Endothelial cell of umbilical vein (primary cell): ENCODE measurements at regions of chr15 and their contacts with region 1.

Region 1: GRCh38 chr15:26954403-26954802 is 16.6 kb upstream of the GABRG3 start:
- DNase-seq: no peak
- H3K4me3 ChIP-seq: no peak overlapping the region
- H3K27ac ChIP-seq: no peak overlapping the region
- H3K4me1 ChIP-seq: no peaks in the 10 kb centered on the region
- H3K27me3 ChIP-seq: no peaks in the 10 kb centered on the region
- CTCF ChIP-seq: no peak
- POLR2A ChIP-seq: no peak

Region 2: DNA sequence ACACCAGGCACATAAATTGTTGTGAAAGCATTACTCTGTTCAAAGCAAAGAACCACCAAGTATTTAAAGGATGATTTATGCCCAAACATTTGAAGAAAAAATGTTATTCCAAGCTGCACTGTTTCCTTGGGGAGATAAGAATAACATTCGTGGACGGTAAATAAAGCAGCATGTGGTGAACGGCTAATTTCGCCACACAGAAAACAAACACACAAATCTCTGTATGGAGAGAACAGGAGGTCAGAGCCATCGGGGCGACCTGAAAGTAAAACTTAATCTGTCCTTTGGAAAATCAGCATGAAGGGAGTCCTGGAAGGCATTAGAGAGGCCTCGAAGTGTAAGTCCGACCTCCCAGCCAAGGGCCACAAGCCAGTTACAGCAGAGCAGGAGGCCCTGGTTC is 10.5 kb before region 1 on chr15:
- CTCF ChIA-PET with region 1: no interaction called
- POLR2A ChIA-PET with region 1: no interaction called
- dilution Hi-C with region 1: no loop called
- intact Hi-C with region 1: no loop called
- DNase-seq: no peak
- H3K4me3 ChIP-seq: no peak overlapping the region
- H3K27ac ChIP-seq: no peak overlapping the region
- H3K4me1 ChIP-seq: no peaks in the 10 kb centered on the region
- H3K27me3 ChIP-seq: no peaks in the 10 kb centered on the region
- CTCF ChIP-seq: no peak
- POLR2A ChIP-seq: no peak

Region 3: GRCh38 chr15:26974120-26974780 is 19.8 kb after region 1 on chr15:
- CTCF ChIA-PET with region 1: no interaction called
- POLR2A ChIA-PET with region 1: no interaction called
- dilution Hi-C with region 1: no loop called
- intact Hi-C with region 1: loop called (anchors 2 kb)
- DNase-seq: no peak
- H3K4me3 ChIP-seq: no peak overlapping the region
- H3K27ac ChIP-seq: no peak overlapping the region
- H3K4me1 ChIP-seq: no peaks in the 10 kb centered on the region
- H3K27me3 ChIP-seq: peaks cover 0 to 4% of the 10 kb centered on the region in 2 experiments
- CTCF ChIP-seq: peak in 1 of 2 donors; percentile 3
- POLR2A ChIP-seq: no peak